Left ventricle myocardium superior (tissue), 1 donor: ENCODE measurements at regions of chr3 and their contacts with region 1.

Region 1: DNA sequence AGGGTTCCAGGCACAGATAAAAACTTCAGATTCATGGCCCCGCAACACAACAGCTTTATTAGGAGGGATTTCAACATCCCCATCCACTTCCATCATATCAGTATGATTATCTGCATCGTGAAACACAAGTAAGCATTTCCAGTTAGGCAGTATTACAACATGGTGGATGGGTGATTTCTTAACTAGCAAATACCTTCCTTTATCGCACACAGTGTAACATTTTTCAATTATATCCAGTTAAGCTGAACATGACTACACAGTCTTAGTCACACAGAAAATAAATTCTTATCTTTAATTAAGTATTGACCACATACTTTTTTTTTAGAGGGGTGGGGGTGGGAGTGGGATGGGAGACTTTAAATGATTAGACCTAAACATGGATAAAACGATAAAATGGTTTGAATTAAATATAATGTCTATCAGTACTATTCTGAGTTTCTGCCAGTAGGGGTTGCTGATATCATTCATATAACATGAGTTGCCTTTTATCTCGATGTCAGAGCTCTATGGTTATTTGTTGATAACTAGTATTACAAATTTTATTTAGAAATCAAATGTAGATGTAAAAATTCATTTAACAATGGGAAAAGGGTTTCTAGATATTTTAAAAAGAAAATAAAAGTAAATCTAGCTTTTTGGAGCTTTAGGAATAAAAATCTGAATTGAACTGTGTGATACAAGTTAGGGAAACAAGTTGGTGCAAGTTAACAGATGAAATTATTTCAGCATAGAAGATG is 146.6 kb downstream of the TBL1XR1 start:
- DNase-seq: no peak
- ATAC-seq: peak; percentile 72

Region 2: GRCh38 chr3:177197041-177197727 is 146.5 kb after region 1 on chr3 and contains the start of gene TBL1XR1:
- intact Hi-C with region 1: loop called (anchors 10 kb)
- DNase-seq: peak; percentile 93
- ATAC-seq: peak; percentile 85
- total RNA-seq, gene TBL1XR1: 99.6 TPM

Region 3: GRCh38 chr3:177359593-177360357 is 309.1 kb after region 1 on chr3:
- intact Hi-C with region 1: loop called (anchors 5 kb)
- DNase-seq: peak; percentile 97
- ATAC-seq: peak; percentile 91

Region 4: DNA sequence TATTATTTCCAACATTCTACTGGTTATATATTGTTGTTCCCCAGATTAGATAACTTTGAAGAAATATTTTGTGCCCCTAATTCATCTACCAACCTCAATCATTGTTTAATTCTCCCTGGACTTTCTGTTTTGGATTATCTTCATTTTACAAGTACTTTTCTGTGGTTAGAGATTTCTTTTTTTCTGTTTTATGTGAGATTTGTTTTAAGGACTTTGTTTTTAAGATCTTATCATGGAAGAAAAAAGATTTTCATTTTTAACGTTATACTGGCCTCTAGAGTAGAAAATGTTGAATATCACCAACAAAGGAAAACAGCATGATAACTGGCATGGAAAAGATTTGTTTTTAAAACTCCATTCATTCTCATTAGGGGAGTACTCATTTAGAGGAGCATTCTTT is 1274.7 kb after region 1 on chr3:
- intact Hi-C with region 1: loop called (anchors 10 kb)
- DNase-seq: no peak
- ATAC-seq: no peak

Region 5: DNA sequence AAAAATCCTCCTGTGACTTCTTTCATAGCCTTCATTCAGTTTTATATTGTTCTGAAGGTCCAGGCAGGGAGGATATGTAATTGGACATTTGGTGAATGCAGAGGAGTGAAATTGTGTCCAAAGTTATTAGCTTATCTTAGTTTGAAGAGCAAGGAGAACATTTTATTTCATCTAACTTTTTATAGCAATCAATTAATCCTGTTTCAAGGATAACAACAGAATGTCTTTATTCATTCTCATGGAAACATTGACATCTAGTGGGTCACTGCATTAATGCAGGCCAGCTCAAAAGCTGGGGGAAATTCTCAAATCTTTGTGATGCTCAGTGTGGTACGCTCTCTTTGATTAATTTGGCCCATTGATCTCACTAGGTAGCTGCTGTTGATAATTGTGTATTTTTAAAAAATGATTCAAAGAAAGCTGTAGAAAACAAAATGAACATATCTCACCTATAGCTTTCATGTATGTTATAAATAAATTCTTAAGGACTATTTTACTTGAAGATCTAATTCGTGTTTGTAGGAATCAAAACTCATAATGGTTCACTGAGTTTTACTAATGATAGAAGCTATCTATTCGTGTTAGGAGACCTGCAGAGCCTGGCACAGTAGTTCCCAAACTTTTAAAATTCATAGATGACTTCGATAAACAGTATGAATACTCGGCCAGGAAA is 1334.7 kb after region 1 on chr3:
- intact Hi-C with region 1: loop called (anchors 10 kb)
- DNase-seq: no peak
- ATAC-seq: peak; percentile 74